ENCODE measurements at regions of chr9 and their contacts with region 1.

Region 1: DNA sequence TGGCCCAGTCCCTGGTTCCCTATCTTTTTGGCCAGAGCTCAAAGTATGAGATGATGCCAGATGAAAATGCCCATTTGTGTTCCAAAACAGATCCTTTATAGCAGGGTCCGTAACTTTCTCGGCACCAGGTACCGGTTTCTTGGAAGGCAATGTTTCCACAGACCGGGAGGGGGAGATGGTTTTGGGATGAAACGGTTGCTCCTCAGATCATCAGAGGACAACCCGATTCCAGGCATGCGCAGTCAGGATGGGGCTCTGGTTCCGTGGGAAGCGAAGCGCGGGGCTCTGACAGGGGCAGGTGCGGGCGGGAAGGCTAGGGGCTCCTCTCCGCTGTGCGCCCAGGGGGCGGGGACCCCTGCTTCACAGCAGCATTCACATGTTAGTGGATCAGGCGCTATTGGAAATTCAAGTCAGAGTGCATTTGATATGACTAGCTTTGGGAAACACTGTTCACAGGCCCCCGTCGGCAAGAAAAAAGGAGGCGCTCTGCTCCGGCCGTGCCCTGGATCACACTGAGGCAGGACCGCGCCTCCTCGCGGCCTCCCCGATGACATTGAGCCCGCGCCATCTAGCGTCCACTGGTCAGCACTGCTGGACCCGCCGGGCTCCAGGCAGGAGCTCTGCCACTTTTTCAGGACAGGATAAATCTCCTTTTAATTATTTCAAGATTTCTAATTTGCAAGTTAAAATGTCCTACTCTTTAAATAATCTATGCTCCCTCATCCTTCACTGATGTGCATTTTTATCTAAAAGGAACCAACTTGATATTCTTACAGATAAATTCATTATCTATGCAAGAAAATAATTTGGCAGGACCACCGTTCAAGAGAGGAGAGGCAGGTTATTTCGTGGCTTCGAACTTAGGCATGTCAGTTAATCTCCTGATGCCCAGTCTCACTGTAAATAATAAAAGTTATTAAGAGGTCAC is 190.0 kb downstream of the FANCC start:
- DNase-seq: peak; percentile 79 to 95 (median 89)
- H3K4me3 ChIP-seq: peak overlapping the region in 1 of 4 donors; percentile 59
- H3K27ac ChIP-seq: peak overlapping the region in 1 of 5 donors; percentile 70
- H3K4me1 ChIP-seq: peaks cover 4 to 12% of the 10 kb centered on the region in 2 donors
- H3K27me3 ChIP-seq: no peaks in the 10 kb centered on the region
- CTCF ChIP-seq: peak; percentile 94 to 99 (median 95)
- POLR2A ChIP-seq: no peak

Region 2: DNA sequence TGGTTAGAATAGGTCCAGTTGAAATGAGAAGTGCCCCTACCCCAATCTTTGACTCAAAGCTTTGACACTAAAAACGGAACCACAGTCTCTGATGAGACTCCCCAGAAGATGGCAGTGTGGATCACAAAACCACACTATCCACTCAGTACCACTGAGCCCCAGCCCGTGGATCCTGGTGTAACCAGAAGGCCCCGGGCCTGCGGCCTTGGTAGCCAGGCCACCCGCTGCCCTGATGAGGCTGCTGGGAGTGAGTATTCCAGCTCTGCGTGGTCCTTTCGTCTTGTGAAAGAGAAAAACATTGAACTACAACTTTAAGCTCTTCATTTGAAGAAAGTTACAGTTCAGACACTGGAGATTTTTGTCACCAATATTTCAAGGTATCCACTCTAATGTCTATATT is 446.0 kb before region 1 on chr9:
- intact Hi-C with region 1: loop called (anchors 5 kb)
- DNase-seq: peak; percentile 75 to 93 (median 89)
- H3K4me3 ChIP-seq: no peak overlapping the region
- H3K27ac ChIP-seq: peak overlapping the region in 1 of 5 donors; percentile 23
- H3K4me1 ChIP-seq: no peaks in the 10 kb centered on the region
- H3K27me3 ChIP-seq: no peaks in the 10 kb centered on the region
- CTCF ChIP-seq: peak; percentile 44 to 91 (median 81)
- POLR2A ChIP-seq: no peak

Region 3: DNA sequence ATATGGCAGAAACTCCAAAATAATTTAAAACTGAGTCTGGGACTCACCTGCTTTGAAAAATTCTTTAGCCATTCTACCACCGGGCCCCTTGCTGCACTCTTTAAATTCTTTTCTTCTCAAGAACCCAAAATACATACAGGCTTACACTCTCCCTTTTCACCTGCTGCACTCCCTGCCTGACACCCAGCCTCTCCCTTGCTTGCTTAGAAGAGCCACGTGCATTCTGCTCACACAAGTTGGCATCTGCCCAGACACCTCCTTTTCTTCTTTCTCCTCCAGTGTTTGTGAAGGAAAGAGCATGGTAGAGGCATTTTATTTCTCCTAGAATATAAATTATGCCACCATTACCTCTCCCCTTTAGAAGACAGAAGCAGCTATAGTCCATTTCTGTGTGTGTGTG is 440.1 kb before region 1 on chr9:
- intact Hi-C with region 1: loop called (anchors 5 kb)
- DNase-seq: peak in 1 of 7 donors; percentile 14
- H3K4me3 ChIP-seq: no peak overlapping the region
- H3K27ac ChIP-seq: no peak overlapping the region
- H3K4me1 ChIP-seq: no peaks in the 10 kb centered on the region
- H3K27me3 ChIP-seq: no peaks in the 10 kb centered on the region
- CTCF ChIP-seq: no peak
- POLR2A ChIP-seq: no peak

Region 4: DNA sequence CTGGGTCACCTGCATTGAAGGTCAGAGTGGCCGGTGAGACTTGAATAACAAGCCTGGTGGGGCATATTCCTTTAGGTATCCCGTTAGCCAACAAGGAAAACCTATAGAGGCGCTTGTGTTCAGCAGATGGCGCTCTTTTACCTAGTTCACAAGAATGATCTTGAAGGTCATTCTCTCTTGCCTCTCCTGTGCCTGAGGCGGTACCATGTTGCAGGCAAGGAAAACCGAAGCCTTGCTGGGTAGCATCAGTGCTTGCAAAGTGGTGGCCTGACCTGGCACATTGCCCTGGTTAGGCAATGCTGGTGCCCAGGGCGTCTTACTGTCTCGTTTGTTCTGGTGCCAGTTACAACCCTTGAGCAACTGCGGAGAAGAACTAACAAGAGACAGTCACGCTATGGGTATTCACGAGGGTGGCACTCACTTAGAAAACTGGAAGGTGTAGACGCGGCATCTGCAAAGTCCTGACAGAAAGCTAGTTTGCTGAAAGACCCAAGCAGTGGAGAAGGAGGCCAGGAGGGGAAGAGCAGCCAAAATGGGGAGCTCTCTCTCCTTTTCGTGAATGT is 344.3 kb before region 1 on chr9:
- intact Hi-C with region 1: loop called (anchors 5 kb)
- DNase-seq: peak; percentile 81 to 96 (median 94)
- H3K4me3 ChIP-seq: no peak overlapping the region
- H3K27ac ChIP-seq: peak overlapping the region in 1 of 5 donors; percentile 46
- H3K4me1 ChIP-seq: peaks cover 0 to 8% of the 10 kb centered on the region in 2 donors
- H3K27me3 ChIP-seq: no peaks in the 10 kb centered on the region
- CTCF ChIP-seq: peak; percentile 34 to 82 (median 72)
- POLR2A ChIP-seq: no peak

Region 5: GRCh38 chr9:95004411-95005277 is 122.9 kb before region 1 on chr9:
- intact Hi-C with region 1: no loop called
- DNase-seq: peak in 6 of 7 donors; percentile 66 to 75 (median 71)
- H3K4me3 ChIP-seq: peak overlapping the region in 3 of 4 donors; percentile 16 to 95 (median 62)
- H3K27ac ChIP-seq: peak overlapping the region; percentile 72 to 99 (median 95)
- H3K4me1 ChIP-seq: peaks cover 31 to 48% of the 10 kb centered on the region in 2 donors
- H3K27me3 ChIP-seq: no peaks in the 10 kb centered on the region
- CTCF ChIP-seq: no peak
- POLR2A ChIP-seq: peak in 1 of 2 donors; percentile 61

Region 6: DNA sequence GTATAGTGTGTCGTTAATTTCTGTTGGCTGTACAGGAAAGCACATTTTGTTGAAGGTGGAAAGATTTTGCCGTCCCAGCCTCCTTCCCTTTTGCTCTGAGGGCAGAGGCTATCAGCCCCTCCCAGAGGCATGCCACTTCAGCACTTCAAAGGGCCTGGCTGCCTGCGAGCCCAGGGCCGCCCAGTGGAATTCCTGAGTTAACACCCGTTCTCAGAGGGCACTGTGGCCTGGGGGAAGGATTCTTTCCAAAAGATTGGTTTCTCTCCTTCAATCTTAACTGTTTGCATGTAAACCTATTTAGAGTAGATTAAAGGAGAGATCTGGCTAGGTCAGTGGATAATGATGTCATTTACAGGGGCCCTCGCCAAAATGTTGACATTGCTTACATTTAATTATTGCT is 48.6 kb before region 1 on chr9:
- intact Hi-C with region 1: no loop called
- DNase-seq: peak in 2 of 7 donors; percentile 51 to 65
- H3K4me3 ChIP-seq: no peak overlapping the region
- H3K27ac ChIP-seq: peak overlapping the region in 2 of 5 donors; percentile 54 to 63
- H3K4me1 ChIP-seq: peaks cover 0 to 35% of the 10 kb centered on the region in 2 donors
- H3K27me3 ChIP-seq: no peaks in the 10 kb centered on the region
- CTCF ChIP-seq: peak in 2 of 6 experiments; percentile 17 to 31
- POLR2A ChIP-seq: no peak

Measured in adrenal gland (tissue), 19 donors.